WTC11 (cell line): ENCODE measurements at regions of chr17 and their contacts with region 1.

Region 1: DNA sequence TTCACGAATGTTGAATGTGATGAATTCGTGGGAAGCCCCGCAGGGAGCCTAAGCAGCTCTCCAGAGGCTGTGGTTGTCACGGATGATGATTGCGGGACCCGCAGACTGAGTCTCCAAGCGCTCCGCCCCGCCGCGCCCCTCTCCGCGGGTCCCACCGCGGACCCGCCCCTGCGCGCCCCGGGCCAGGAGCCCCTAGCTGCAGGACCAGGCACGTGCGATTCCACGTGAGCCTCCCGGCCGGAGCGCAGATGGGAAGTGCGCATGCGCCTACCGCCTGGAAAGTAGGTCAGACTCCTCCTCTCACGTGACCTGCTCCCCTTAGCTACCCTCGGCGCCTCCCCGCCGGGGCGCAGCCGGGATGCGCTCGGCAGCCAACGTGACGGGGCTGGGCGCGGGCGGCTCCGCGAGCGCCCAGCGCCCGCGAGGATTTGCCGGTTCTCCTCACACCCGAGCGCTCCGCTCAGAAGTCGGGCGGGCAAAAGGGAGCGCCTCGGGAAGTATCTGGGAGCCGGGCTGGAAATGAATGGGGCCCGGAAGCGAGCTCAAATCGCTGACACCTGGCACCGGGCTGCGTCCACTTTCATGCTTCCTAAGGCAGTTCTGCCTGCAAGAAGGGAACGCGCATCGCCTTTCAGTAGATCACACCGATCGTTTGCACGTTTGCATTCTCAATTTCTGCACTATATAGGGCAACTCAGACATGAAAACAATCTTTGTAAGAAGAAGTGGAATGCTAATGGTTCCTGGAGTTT is 26.4 kb upstream of the HLF start:
- DNase-seq: peak; percentile 97
- ATAC-seq: peak; percentile 95
- H3K4me3 Mint-ChIP-seq: peak overlapping the region; percentile 84
- H3K27ac Mint-ChIP-seq: peak overlapping the region; percentile 96
- H3K4me1 Mint-ChIP-seq: peaks cover 17% of the 10 kb centered on the region
- H3K27me3 Mint-ChIP-seq: peaks cover 35% of the 10 kb centered on the region
- CTCF ChIP-seq: no peak

Region 2: GRCh38 chr17:55264645-55265298 is 26.4 kb after region 1 on chr17 and contains the start of gene HLF:
- CTCF ChIA-PET with region 1: interaction called, 10 read pairs
- POLR2A ChIA-PET with region 1: interaction called, 11 read pairs
- DNase-seq: peak; percentile 64
- ATAC-seq: peak; percentile 73
- H3K4me3 Mint-ChIP-seq: peak within 1 kb of the TSS; percentile 68
- H3K27ac Mint-ChIP-seq: no peak within 1 kb of the TSS
- H3K4me1 Mint-ChIP-seq: peaks cover 14% of the 10 kb centered on the region
- H3K27me3 Mint-ChIP-seq: peaks cover 92% of the 10 kb centered on the region
- CTCF ChIP-seq: no peak
- total RNA-seq, gene HLF: 0.30 to 0.34 TPM (median 0.31 TPM) in 3 replicates

Region 3: GRCh38 chr17:55314784-55315491 is 76.6 kb after region 1 on chr17:
- CTCF ChIA-PET with region 1: no interaction called
- POLR2A ChIA-PET with region 1: no interaction called
- DNase-seq: no peak
- ATAC-seq: no peak
- H3K4me3 Mint-ChIP-seq: no peak overlapping the region
- H3K27ac Mint-ChIP-seq: no peak overlapping the region
- H3K4me1 Mint-ChIP-seq: no peaks in the 10 kb centered on the region
- H3K27me3 Mint-ChIP-seq: no peaks in the 10 kb centered on the region
- CTCF ChIP-seq: no peak

Region 4: GRCh38 chr17:55348749-55349354 is 110.5 kb after region 1 on chr17:
- CTCF ChIA-PET with region 1: interaction called, 18 read pairs
- POLR2A ChIA-PET with region 1: no interaction called
- DNase-seq: peak; percentile 31
- ATAC-seq: peak; percentile 64
- H3K4me3 Mint-ChIP-seq: no peak overlapping the region
- H3K27ac Mint-ChIP-seq: no peak overlapping the region; the same call in 1 of the 2 replicates
- H3K4me1 Mint-ChIP-seq: peaks cover 33% of the 10 kb centered on the region
- H3K27me3 Mint-ChIP-seq: no peaks in the 10 kb centered on the region
- CTCF ChIP-seq: peak; percentile 66; the same call in 1 of the 2 replicates